ENCODE measurements at regions of chr5 and their contacts with region 1.

Region 1: GRCh38 chr5:170225326-170226128 is 7.3 kb upstream of the C5orf58 start:
- DNase-seq: no peak
- H3K4me3 ChIP-seq: no peak overlapping the region
- CTCF ChIP-seq: peak; percentile 66

Region 2: GRCh38 chr5:169970911-169971765 is 254.4 kb before region 1 on chr5:
- CTCF ChIA-PET with region 1: no interaction called
- POLR2A ChIA-PET with region 1: no interaction called
- DNase-seq: peak; percentile 17
- H3K4me3 ChIP-seq: peak overlapping the region; percentile 4; the same call in 1 of the 2 replicates
- CTCF ChIP-seq: no peak

Region 3: DNA sequence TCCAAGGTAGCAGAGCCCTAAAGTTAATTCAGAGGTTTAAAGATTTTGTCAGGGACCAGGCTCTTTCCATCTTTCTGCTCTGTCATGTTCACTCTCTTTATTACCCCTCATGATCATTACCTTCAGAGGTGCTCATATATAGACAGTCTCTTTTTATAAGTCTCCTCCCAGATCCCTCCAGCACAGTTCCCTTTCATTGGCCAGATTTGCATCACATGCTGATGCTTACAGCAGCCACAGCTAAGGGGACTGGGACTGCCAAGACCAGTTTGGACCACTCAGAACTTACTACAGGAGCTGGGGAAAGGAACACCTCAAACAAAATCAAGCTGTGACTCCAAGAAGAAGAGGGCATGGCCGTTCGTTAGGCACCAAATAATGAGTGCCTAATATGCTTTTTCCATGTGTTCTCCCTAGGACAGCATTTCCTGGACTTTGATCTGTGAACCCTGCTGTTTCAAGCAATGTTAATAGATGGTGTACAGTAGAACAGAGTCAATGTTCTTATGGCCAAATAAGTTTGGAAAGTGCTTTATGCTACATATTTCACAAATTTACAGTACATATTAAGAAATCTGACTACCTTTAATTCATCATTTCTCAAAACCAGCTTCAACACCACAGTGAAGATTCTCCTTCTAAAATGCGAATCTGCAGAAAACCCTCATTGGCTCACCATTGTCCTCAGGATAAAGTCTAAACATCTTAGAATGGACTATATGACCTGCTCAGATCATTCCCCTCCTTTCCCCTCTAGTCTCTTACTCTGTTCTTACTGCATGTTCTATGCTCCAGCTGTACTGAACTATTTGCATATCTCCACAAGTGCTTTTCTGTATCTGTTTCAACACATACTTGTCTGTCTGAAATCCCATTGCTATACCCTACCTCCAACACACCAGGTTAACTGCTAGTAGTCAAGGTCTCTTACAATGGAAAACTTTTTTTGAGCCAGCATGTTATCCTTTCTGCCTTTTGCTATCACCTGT is 10.6 kb after region 1 on chr5:
- CTCF ChIA-PET with region 1: interaction called, 37 read pairs
- POLR2A ChIA-PET with region 1: no interaction called
- DNase-seq: no peak
- H3K4me3 ChIP-seq: no peak overlapping the region
- CTCF ChIP-seq: no peak

Region 4: GRCh38 chr5:170420780-170421412 is 195.4 kb after region 1 on chr5:
- CTCF ChIA-PET with region 1: interaction called, 314 read pairs
- POLR2A ChIA-PET with region 1: no interaction called
- DNase-seq: peak; percentile 5
- H3K4me3 ChIP-seq: no peak overlapping the region
- CTCF ChIP-seq: peak; percentile 72

Region 5: DNA sequence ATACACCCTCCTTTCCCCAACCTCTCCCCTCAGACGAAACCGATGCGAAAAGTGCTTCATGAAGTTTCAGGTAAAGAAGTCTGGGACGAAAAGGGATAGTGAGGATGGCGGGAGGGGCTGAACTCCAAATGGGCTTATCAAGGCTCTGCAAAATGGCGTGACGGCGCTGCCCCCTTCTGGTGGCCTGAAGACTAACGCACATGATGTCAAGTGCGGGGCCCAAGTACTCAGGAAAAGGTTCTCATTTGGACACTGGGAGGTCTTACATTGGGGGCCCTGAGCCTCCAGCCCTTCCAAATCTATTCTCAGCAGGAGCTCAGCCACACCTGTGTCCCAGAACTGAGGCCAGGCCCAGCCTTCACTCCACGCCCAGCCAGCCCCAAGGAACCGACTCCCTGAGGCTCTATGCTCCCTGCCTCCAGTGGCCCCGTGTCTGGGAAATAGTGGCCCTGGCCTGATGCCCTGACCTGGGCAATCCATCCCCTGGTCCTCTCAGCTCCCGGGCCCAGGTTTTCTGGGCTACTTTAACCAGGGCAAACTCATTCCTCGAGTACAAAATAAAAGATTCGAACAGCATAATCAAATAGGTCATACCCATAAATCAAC is 398.2 kb after region 1 on chr5:
- CTCF ChIA-PET with region 1: interaction called, 10 read pairs
- POLR2A ChIA-PET with region 1: no interaction called
- DNase-seq: peak; percentile 5
- H3K4me3 ChIP-seq: no peak overlapping the region
- CTCF ChIP-seq: peak; percentile 80